ENCODE measurements at regions of chr2 and their contacts with region 1.

Region 1: DNA sequence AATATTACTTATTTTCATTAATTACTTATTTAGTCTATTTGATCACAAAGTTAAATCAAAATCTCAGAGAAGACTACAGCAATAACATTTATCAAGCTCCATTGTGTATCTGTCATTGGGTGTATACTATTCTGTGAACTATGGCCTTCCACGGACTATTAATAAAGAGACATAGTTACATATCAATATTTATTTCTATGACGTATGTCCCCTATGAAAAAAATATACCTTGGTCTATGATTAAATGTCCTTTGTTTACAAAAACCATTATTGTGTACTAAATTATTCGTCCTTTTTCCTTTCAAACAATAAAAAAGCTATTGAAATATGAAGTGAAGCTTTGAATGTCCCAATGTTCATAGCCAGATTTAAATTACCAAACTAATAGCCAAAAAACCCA is 895.9 kb upstream of the SLC39A10 start:
- DNase-seq: no peak
- H3K4me3 ChIP-seq: no peak overlapping the region
- CTCF ChIP-seq: no peak

Region 2: DNA sequence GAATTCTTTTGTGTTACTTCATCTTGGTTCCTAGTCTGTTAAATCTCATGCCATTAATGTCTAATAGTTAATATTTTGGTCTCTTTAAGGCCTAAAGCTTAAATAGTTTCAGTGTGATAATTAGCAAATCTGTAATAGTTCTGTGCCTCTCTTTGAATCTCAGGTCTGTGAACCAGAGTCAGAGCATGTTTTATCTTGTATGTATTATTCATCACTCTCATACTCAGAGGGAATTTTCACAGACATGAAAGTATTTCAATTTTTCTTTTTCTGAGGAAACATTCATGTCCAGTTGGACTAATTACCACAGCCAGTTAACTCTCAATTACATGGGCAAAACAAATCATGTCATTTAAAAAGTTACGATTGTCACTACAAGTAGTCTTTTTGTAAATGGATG is 35.9 kb before region 1 on chr2:
- in situ Hi-C with region 1: loop called (anchors 5 kb)
- DNase-seq: no peak
- H3K4me3 ChIP-seq: no peak overlapping the region
- CTCF ChIP-seq: no peak

Measured in astrocyte of the cerebellum (primary cell).